CD8-positive, alpha-beta T cell (primary cell): ENCODE measurements at regions of chr19 and their contacts with region 1.

Region 1: DNA sequence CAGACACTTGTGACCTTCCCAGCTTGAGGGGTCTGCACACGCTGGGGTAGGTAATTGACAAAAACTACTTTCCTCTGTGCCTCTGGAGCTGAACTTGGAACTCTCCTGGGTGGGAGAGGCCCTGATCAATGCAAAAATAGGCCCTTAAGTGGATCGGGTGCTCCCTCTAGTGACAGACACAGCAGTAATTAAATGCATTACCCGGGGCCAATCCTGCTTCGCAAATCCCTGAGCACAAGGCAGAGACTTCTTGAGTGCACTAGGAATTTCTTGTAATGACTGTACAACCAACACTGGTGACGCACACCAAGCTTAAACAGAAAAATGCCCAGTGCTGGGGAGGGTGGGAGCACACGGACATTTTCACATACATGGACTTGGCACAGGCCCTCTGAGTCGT is 10.6 kb upstream of the UBE2S start:
- DNase-seq: peak in 8 of 9 experiments; percentile 25 to 78 (median 54)
- ATAC-seq: peak; percentile 54
- H3K4me3 ChIP-seq: no peak overlapping the region
- H3K4me3 Mint-ChIP-seq: no peak overlapping the region
- H3K27ac ChIP-seq: no peak overlapping the region
- H3K27ac Mint-ChIP-seq: no peak overlapping the region
- H3K4me1 ChIP-seq: peaks cover 18% of the 10 kb centered on the region
- H3K4me1 Mint-ChIP-seq: peaks cover 23% of the 10 kb centered on the region
- H3K27me3 ChIP-seq: no peaks in the 10 kb centered on the region
- H3K27me3 Mint-ChIP-seq: no peaks in the 10 kb centered on the region
- CTCF ChIP-seq: peak; percentile 68

Region 2: DNA sequence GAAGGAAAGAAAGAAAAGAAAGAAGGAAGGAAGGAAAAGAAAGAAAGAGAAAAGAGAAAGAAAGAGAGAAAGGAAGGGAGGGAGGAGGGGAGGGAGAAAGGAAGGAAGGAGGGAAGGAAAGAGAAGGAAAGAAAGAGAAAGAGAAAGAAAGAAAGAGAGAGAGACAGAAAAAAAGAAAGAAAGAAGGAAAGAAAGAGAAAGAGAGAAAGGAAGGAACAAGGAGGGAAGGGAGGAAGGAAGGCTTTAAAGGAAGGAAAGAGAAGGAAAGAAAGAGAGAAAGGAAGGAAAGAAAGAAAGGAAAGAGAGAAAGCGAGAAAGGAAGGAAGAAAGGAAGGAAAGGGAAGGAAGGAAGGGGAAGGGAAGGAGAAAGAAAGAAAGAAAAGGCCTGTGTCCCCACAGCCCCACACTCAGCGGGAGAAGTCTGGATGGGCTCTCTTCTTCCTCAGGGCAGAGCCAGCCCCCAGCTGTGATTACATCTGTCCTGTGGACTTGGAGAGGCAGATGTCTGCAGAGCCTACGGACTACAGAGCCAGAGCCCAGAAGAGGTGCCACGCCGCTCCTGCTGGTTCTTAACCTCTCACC is 218.5 kb before region 1 on chr19:
- CTCF ChIA-PET with region 1: no interaction called
- POLR2A ChIA-PET with region 1: no interaction called
- intact Hi-C with region 1: loop called in 1 of 2 experiments (anchors 5 kb)
- DNase-seq: no peak
- ATAC-seq: no peak
- H3K4me3 ChIP-seq: no peak overlapping the region
- H3K4me3 Mint-ChIP-seq: no peak overlapping the region
- H3K27ac ChIP-seq: no peak overlapping the region
- H3K27ac Mint-ChIP-seq: no peak overlapping the region
- H3K4me1 ChIP-seq: no peaks in the 10 kb centered on the region
- H3K4me1 Mint-ChIP-seq: no peaks in the 10 kb centered on the region
- H3K27me3 ChIP-seq: peaks cover 0 to 2% of the 10 kb centered on the region in 2 experiments
- H3K27me3 Mint-ChIP-seq: peaks cover 34% of the 10 kb centered on the region
- CTCF ChIP-seq: no peak

Region 3: DNA sequence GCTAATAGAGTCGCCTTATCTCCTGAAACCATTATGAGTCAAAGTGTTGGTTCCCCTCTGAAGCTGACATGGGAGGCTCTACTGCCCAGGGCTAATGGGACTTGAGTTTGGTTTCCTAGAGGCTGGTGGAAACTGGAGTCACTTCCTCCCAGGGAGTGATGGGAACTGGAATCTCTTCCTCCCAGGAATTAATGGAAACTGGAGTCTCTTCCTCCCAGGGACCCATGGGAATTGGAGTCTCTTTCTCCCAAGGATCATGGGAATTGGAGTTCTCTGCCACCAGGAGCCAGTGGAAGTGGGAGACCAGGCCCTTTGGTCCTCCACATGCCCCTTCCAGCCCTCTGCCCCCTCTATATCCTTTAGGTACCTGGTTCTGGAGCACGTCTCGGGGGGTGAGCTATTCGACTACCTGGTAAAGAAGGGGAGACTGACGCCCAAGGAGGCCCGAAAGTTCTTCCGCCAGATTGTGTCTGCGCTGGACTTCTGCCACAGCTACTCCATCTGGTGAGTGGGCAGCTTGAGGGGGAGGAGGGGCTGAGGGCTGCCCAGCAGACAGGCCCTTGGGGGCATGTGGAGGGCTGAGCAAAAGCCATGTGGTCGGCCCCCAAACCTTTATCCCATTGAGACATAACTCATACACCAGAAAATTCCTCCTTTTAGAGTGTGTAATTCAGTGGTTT is 128.9 kb before region 1 on chr19:
- CTCF ChIA-PET with region 1: interaction called, 10 read pairs
- POLR2A ChIA-PET with region 1: no interaction called
- intact Hi-C with region 1: loop called in 1 of 2 experiments (anchors 2 kb)
- DNase-seq: no peak
- ATAC-seq: no peak
- H3K4me3 ChIP-seq: no peak overlapping the region
- H3K4me3 Mint-ChIP-seq: no peak overlapping the region
- H3K27ac ChIP-seq: no peak overlapping the region
- H3K27ac Mint-ChIP-seq: no peak overlapping the region
- H3K4me1 ChIP-seq: peaks cover 4% of the 10 kb centered on the region
- H3K4me1 Mint-ChIP-seq: peaks cover 6% of the 10 kb centered on the region
- H3K27me3 ChIP-seq: no peaks in the 10 kb centered on the region
- H3K27me3 Mint-ChIP-seq: no peaks in the 10 kb centered on the region
- CTCF ChIP-seq: no peak

Region 4: GRCh38 chr19:55436847-55437246 is 18.7 kb after region 1 on chr19:
- CTCF ChIA-PET with region 1: no interaction called
- POLR2A ChIA-PET with region 1: no interaction called
- intact Hi-C with region 1: no loop called
- DNase-seq: no peak
- ATAC-seq: no peak
- H3K4me3 ChIP-seq: no peak overlapping the region
- H3K4me3 Mint-ChIP-seq: no peak overlapping the region
- H3K27ac ChIP-seq: no peak overlapping the region
- H3K27ac Mint-ChIP-seq: no peak overlapping the region
- H3K4me1 ChIP-seq: peaks cover 15% of the 10 kb centered on the region
- H3K4me1 Mint-ChIP-seq: peaks cover 14% of the 10 kb centered on the region
- H3K27me3 ChIP-seq: peaks cover 30 to 51% of the 10 kb centered on the region in 2 experiments
- H3K27me3 Mint-ChIP-seq: peaks cover 46% of the 10 kb centered on the region
- CTCF ChIP-seq: no peak

Region 5: DNA sequence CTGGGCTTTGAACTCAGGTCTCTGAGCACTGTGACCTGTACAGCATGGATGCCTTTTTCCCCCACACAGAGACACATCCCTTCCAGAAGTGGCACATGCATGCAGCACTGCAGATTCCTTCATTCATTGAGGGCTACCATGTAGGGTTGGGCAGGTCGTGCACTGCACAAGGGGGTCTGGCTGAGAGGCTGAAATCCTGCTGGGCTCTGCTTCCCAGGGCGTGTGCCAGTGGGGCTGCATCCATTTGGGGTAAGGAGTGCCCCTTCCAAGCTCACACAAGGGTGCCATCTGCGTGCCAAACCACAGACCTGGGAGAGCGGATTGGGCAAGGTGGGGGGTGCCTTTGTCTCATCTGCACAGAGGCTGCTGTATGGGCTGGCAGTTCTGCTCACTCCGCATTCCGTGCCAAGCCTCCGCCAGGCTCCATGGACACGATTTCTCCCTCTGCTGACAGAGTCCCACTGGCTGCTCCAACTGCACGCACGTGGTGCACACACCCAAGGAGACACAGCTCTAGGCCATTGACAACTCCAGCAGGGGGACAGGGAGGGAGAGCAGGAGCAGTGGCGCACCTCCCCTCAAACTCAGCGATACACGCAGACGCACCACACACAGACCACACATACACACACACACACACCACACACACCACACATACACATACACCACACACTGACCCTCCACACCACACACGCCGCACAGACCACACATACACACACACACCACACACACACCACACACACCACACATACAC is 29.4 kb after region 1 on chr19:
- CTCF ChIA-PET with region 1: no interaction called
- POLR2A ChIA-PET with region 1: no interaction called
- intact Hi-C with region 1: no loop called
- DNase-seq: no peak
- ATAC-seq: no peak
- H3K4me3 ChIP-seq: no peak overlapping the region
- H3K4me3 Mint-ChIP-seq: no peak overlapping the region
- H3K27ac ChIP-seq: no peak overlapping the region
- H3K27ac Mint-ChIP-seq: no peak overlapping the region
- H3K4me1 ChIP-seq: peaks cover 13% of the 10 kb centered on the region
- H3K4me1 Mint-ChIP-seq: peaks cover 15% of the 10 kb centered on the region
- H3K27me3 ChIP-seq: peaks cover 24 to 38% of the 10 kb centered on the region in 2 experiments
- H3K27me3 Mint-ChIP-seq: peaks cover 40% of the 10 kb centered on the region
- CTCF ChIP-seq: no peak